Gastrocnemius medialis (tissue), 4 donors: ENCODE measurements at regions of chr9 and their contacts with region 1.

Region 1: GRCh38 chr9:136093995-136094881 is 851 bp downstream of the NACC2 start:
- DNase-seq: peak; percentile 91 to 93
- ATAC-seq: peak; percentile 51 to 57
- H3K4me3 ChIP-seq: peak overlapping the region; percentile 67 to 90 (median 78)
- H3K27ac ChIP-seq: peak overlapping the region; percentile 95 to 100 (median 98)
- H3K4me1 ChIP-seq: peaks cover 51 to 57% of the 10 kb centered on the region in 2 donors
- H3K27me3 ChIP-seq: no peaks in the 10 kb centered on the region
- CTCF ChIP-seq: peak in 2 of 5 experiments; percentile 24 to 27
- POLR2A ChIP-seq: peak; percentile 78 to 86

Region 2: GRCh38 chr9:136059321-136060233 is 34.7 kb before region 1 on chr9:
- in situ Hi-C with region 1: no loop called
- intact Hi-C with region 1: no loop called
- DNase-seq: peak in 1 of 2 donors; percentile 10
- ATAC-seq: no peak
- H3K4me3 ChIP-seq: no peak overlapping the region
- H3K27ac ChIP-seq: no peak overlapping the region
- H3K4me1 ChIP-seq: peaks cover 0 to 15% of the 10 kb centered on the region in 2 donors
- H3K27me3 ChIP-seq: no peaks in the 10 kb centered on the region
- CTCF ChIP-seq: no peak
- POLR2A ChIP-seq: no peak

Region 3: DNA sequence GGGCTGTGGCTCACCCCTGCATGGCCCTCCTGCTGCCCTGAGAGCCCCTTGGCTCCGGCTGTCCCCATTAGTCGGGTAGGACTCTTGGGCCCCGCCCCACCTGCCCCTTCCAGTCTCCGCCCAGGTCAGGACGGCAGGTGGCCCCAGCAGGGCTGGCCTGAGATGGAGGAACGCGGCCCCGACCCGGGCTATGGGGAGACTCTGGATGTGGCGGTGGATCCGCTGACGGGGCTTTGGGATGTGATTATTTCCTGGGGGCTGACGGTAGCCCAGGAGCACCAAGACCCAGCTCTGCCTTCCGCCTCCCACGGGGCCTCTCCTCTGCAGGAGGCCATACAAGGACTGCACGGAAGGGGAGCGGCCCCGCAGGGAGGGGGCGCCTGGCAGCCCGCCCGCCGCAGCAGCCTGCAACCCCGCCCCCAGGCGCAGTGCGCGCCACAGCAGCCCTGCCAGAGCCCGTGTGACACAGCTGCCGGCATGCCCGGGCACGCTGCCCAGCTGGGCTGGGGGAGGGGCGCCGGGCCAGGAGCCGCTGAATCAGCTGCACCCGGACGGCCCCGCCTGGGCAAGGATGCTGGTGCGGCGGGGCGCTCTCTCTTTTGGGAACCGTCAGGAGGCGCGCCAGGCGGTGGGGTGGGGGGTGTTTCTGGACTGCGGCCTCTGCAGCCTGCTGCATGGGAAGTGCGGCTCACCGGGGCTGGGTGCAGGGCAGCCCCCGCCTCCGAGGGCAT is 15.3 kb after region 1 on chr9:
- in situ Hi-C with region 1: no loop called
- intact Hi-C with region 1: loop called (anchors 2 kb)
- DNase-seq: peak; percentile 83 to 94
- ATAC-seq: peak; percentile 74 to 78
- H3K4me3 ChIP-seq: peak overlapping the region; percentile 24 to 55 (median 44)
- H3K27ac ChIP-seq: peak overlapping the region; percentile 72 to 84 (median 74)
- H3K4me1 ChIP-seq: peaks cover 40 to 49% of the 10 kb centered on the region in 2 donors
- H3K27me3 ChIP-seq: no peaks in the 10 kb centered on the region
- CTCF ChIP-seq: peak in 2 of 5 experiments; percentile 5 to 22
- POLR2A ChIP-seq: peak in 1 of 2 donors; percentile 19